ENCODE measurements at regions of chr19 and their contacts with region 1.

Region 1: GRCh38 chr19:49676690-49677231 is 310 bp upstream of the PRMT1 start:
- DNase-seq: peak; percentile 97 to 100
- ATAC-seq: peak; percentile 72 to 88 (median 76)
- H3K4me3 ChIP-seq: peak overlapping the region; percentile 87
- H3K4me3 Mint-ChIP-seq: peak overlapping the region; percentile 99
- H3K27ac ChIP-seq: peak overlapping the region; percentile 93
- H3K27ac Mint-ChIP-seq: peak overlapping the region; percentile 98 to 99
- H3K4me1 ChIP-seq: peaks cover 46% of the 10 kb centered on the region
- H3K4me1 Mint-ChIP-seq: peaks cover 30 to 56% of the 10 kb centered on the region in 2 donors
- H3K27me3 ChIP-seq: no peaks in the 10 kb centered on the region
- H3K27me3 Mint-ChIP-seq: no peaks in the 10 kb centered on the region
- CTCF ChIP-seq: no peak

Region 2: DNA sequence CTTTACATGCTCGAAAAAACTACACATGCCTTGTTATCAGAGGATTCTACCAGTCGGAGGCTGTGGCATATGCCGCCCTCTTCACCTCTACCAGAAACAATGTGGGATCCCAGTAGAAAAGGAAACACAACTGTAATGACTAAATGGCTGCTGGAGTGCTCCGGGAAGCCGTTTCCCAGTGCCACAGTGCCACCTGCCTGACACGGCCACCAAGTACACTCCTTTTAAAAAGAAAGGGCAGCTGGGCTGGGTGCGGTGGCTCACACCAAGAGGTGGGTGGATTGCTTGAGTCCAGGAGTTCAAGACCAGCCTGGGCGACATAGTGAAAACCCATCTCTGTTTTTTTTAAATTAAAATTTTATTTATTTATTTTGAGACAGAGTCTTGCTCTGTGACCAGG is 451.9 kb before region 1 on chr19:
- intact Hi-C with region 1: loop called (anchors 1 kb)
- DNase-seq: peak in 1 of 2 donors; percentile 37
- ATAC-seq: peak in 1 of 3 donors; percentile 31
- H3K4me3 ChIP-seq: no peak overlapping the region
- H3K4me3 Mint-ChIP-seq: no peak overlapping the region
- H3K27ac ChIP-seq: no peak overlapping the region
- H3K27ac Mint-ChIP-seq: no peak overlapping the region
- H3K4me1 ChIP-seq: no peaks in the 10 kb centered on the region
- H3K4me1 Mint-ChIP-seq: peaks cover 7 to 8% of the 10 kb centered on the region in 2 donors
- H3K27me3 ChIP-seq: no peaks in the 10 kb centered on the region
- H3K27me3 Mint-ChIP-seq: peaks cover 0 to 9% of the 10 kb centered on the region in 2 donors
- CTCF ChIP-seq: no peak

Region 3: GRCh38 chr19:49391581-49392399 is 285.0 kb before region 1 on chr19:
- intact Hi-C with region 1: loop called (anchors 2 kb)
- DNase-seq: peak; percentile 57 to 91
- ATAC-seq: peak; percentile 72 to 79 (median 77)
- H3K4me3 ChIP-seq: no peak overlapping the region
- H3K4me3 Mint-ChIP-seq: no peak overlapping the region
- H3K27ac ChIP-seq: peak overlapping the region; percentile 26
- H3K27ac Mint-ChIP-seq: peak overlapping the region in 1 of 2 donors; percentile 23
- H3K4me1 ChIP-seq: peaks cover 37% of the 10 kb centered on the region
- H3K4me1 Mint-ChIP-seq: peaks cover 11 to 26% of the 10 kb centered on the region in 2 donors
- H3K27me3 ChIP-seq: no peaks in the 10 kb centered on the region
- H3K27me3 Mint-ChIP-seq: peaks cover 0 to 7% of the 10 kb centered on the region in 2 donors
- CTCF ChIP-seq: peak; percentile 85

Region 4: DNA sequence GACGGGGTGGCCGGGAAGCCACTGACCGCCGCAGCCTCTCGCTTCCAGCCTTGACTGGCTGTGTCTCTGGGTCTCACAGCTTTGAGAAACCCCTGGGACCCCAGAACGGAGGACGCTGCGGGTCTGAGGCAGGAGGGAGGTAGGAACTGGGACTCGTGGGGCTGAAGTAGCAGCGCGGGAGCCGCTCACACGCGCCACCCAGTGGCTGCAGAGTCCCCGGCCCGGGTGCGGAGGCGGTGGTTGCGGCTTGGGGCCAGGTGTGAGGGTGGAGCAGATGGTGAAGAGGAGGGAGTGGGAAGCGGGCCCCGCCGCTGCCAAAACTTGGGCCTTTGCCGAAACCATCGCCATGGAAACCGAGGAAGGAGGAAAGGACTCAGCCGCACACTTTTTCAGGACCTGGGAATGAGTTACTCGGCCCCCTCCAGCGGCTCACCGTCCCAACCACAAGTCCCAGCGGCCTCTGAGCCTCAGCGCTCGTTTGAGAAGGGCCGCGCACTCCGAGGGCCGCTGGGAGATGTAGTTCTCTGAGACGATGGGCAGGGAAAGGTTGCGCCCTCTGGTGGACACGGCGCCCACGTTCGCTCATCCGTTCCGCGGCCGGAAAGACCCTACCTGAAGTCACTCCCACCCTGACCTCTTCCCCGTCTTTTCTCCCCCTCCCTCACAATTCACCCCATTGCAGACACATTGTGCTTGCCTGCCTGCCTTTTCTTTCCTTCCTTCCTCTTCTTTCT is 233.2 kb before region 1 on chr19:
- intact Hi-C with region 1: no loop called
- DNase-seq: peak; percentile 92 to 97
- ATAC-seq: peak; percentile 92 to 97 (median 93)
- H3K4me3 ChIP-seq: peak overlapping the region; percentile 52
- H3K4me3 Mint-ChIP-seq: peak overlapping the region; percentile 83
- H3K27ac ChIP-seq: peak overlapping the region; percentile 64
- H3K27ac Mint-ChIP-seq: peak overlapping the region; percentile 69 to 88
- H3K4me1 ChIP-seq: peaks cover 32% of the 10 kb centered on the region
- H3K4me1 Mint-ChIP-seq: peaks cover 22 to 48% of the 10 kb centered on the region in 2 donors
- H3K27me3 ChIP-seq: peaks cover 33% of the 10 kb centered on the region
- H3K27me3 Mint-ChIP-seq: peaks cover 35 to 36% of the 10 kb centered on the region in 2 donors
- CTCF ChIP-seq: peak; percentile 81

Region 5: DNA sequence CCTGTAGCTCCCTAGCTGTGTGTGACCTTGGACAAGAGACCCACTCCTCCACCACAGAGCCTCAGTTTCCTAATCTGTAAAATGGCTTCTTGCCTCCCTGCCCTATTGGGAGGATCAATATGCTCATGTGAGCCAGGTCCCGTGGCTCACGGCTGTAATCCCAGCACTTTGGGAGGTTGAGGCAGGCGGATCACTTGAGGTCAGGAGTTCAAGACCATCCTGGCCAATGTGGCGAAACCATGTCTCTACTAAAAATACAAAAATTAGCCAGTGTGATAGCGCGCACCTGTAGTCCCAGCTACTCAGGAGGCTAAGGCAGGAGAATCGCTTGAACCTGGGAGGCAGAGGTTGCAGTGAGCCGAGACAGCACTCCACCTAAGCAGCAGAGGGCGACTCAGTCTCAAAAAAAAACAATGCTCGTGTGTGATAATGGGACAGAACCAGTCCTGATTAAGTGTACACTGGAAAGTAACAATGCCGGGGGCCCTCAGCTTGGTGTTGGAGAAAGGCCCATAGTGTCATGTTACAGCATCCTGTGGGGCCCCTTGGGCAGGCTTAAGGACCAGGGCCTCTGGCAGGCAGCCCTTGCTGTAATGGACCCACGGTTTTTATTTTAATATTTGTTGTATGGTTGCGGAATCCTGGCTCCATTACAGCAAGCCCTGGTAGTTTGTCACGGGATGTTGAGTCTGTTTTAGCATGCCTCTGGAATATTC is 173.7 kb before region 1 on chr19:
- intact Hi-C with region 1: loop called (anchors 1 kb)
- DNase-seq: peak in 1 of 2 donors; percentile 82
- ATAC-seq: peak in 1 of 3 donors; percentile 11
- H3K4me3 ChIP-seq: no peak overlapping the region
- H3K4me3 Mint-ChIP-seq: no peak overlapping the region
- H3K27ac ChIP-seq: peak overlapping the region; percentile 83
- H3K27ac Mint-ChIP-seq: peak overlapping the region; percentile 97
- H3K4me1 ChIP-seq: peaks cover 60% of the 10 kb centered on the region
- H3K4me1 Mint-ChIP-seq: peaks cover 30 to 48% of the 10 kb centered on the region in 2 donors
- H3K27me3 ChIP-seq: no peaks in the 10 kb centered on the region
- H3K27me3 Mint-ChIP-seq: no peaks in the 10 kb centered on the region
- CTCF ChIP-seq: peak; percentile 60

Region 6: GRCh38 chr19:49590071-49590970 is 86.4 kb before region 1 on chr19:
- intact Hi-C with region 1: loop called (anchors 2 kb)
- DNase-seq: peak; percentile 88 to 97
- ATAC-seq: peak; percentile 74 to 91 (median 80)
- H3K4me3 ChIP-seq: peak overlapping the region; percentile 88
- H3K4me3 Mint-ChIP-seq: peak overlapping the region; percentile 90
- H3K27ac ChIP-seq: peak overlapping the region; percentile 52
- H3K27ac Mint-ChIP-seq: peak overlapping the region; percentile 89 to 90
- H3K4me1 ChIP-seq: peaks cover 29% of the 10 kb centered on the region
- H3K4me1 Mint-ChIP-seq: peaks cover 32 to 41% of the 10 kb centered on the region in 2 donors
- H3K27me3 ChIP-seq: no peaks in the 10 kb centered on the region
- H3K27me3 Mint-ChIP-seq: no peaks in the 10 kb centered on the region
- CTCF ChIP-seq: no peak

Region 7: DNA sequence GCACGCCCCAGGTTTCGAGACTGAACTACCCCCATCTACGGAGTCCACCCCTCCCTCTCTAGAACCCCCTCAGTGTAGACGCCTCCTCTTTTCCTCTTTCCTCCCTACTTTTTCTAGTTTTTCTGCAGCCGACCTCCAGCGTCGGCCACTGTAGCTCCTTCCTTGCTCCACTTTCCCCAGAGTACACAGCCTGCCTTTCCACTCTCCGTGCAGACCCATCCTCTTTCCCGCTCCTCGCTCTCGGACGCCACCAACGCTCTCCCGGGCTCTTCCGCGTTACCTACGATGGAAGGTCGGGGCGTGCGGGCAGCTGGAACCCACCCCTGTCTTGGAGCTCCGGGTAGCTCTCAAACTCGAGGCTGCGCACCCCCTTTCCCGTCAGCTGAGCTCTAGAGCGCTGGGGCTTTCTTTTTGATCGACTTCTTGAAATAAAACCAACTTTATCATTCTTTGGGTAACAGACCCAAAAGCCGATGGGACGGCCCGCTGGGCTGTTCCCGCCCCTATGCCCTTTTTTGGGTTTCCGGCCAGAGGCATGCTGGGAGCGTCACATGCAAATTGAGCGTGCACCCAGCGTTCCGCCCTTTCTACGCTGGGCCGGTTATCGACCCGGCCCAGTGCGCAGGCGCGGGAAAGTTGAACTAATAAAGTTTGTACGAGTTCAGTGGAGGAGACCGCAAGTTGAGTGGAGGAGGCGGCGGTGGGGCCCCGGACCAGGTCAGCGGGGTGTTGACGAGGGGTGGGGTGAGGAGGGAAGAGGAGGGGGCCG is 11.2 kb before region 1 on chr19 and contains the starts of genes BCL2L12 and IRF3:
- intact Hi-C with region 1: loop called (anchors 1 kb)
- DNase-seq: peak; percentile 98 to 100
- ATAC-seq: peak; percentile 83 to 93 (median 86)
- H3K4me3 ChIP-seq: peak within 1 kb of the TSS; percentile 91
- H3K4me3 Mint-ChIP-seq: peak within 1 kb of the TSS; percentile 99
- H3K27ac ChIP-seq: peak within 1 kb of the TSS; percentile 73
- H3K27ac Mint-ChIP-seq: peak within 1 kb of the TSS; percentile 96 to 99
- H3K4me1 ChIP-seq: peaks cover 34% of the 10 kb centered on the region
- H3K4me1 Mint-ChIP-seq: peaks cover 33 to 50% of the 10 kb centered on the region in 2 donors
- H3K27me3 ChIP-seq: no peaks in the 10 kb centered on the region
- H3K27me3 Mint-ChIP-seq: no peaks in the 10 kb centered on the region
- CTCF ChIP-seq: no peak
- total RNA-seq, gene BCL2L12: 15.6 to 34.6 (median 22.3) TPM
- total RNA-seq, gene IRF3: 176 to 184 (median 179) TPM

Measured in natural killer cell (primary cell).